HCT116 (cell line): ENCODE measurements at regions of chr3 and their contacts with region 1.

Region 1: DNA sequence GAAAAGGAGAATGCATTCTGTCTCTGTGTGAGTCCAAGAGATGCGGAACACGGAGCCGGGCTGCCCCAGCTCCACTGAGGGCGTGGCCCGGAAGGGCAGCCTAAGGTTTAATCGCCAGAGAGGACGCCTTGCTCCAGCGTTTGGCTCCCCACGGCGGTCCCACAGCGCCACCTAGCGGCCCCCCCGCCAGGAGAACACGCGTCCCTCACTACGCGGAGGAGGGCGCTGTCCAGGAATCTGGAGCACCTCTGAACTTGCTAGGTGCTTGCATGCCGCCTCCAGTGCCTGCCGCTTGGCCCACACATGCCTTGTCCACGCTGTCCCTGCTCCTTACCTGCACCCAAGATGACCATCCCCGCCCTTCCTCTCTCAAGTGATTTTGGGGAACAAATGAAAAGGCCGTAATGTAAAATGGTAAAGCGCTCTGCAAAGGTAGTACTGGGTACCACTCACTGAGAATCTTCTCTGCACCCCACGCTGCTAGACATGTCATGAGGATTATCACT is 14.4 kb upstream of the MRPS22 start:
- DNase-seq: peak; percentile 74
- ATAC-seq: peak; percentile 93
- H3K4me3 ChIP-seq: peak overlapping the region; percentile 26 to 38
- H3K27ac ChIP-seq: peak overlapping the region; percentile 29; the same call in 1 of the 2 replicates
- H3K4me1 ChIP-seq: peaks cover 34 to 44% of the 10 kb centered on the region in 2 experiments
- H3K27me3 ChIP-seq: no peaks in the 10 kb centered on the region
- CTCF ChIP-seq: peak; percentile 99 to 100 (median 99)
- POLR2A ChIP-seq: no peak
- RAD21 ChIP-seq: peak; percentile 100

Region 2: DNA sequence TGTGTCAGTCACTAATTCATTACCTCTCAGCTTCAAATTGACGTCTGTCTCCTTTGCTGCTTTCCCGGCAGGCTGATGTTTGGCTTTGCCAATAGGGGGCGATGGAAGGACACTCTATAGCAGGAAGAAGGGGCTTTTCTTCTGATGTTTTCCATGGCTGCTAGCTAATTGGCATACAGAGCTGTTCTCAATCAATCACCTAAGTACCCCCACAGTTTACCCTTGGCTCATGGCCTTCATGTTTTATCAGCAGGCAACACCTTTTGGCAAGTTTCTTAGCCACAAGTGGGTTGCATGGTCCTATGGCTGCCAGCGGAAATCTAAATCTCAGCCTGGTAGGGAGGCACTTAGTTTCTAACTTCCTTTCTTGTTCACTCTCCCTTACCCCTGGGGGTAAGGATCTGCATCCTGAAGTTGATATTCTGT is 849.9 kb before region 1 on chr3:
- CTCF ChIA-PET with region 1: interaction called, 3 read pairs
- POLR2A ChIA-PET with region 1: no interaction called
- RAD21 ChIA-PET with region 1: no interaction called
- intact Hi-C with region 1: loop called (anchors 10 kb)
- DNase-seq: peak; percentile 35
- ATAC-seq: peak; percentile 87
- H3K4me3 ChIP-seq: no peak overlapping the region
- H3K27ac ChIP-seq: no peak overlapping the region
- H3K4me1 ChIP-seq: no peaks in the 10 kb centered on the region
- H3K27me3 ChIP-seq: no peaks in the 10 kb centered on the region
- CTCF ChIP-seq: peak; percentile 65 to 97 (median 91); a peak in 5 of 6 replicates
- POLR2A ChIP-seq: no peak
- RAD21 ChIP-seq: peak; percentile 80

Region 3: GRCh38 chr3:138923531-138923994 is 405.8 kb before region 1 on chr3:
- CTCF ChIA-PET with region 1: interaction called, 7 read pairs
- POLR2A ChIA-PET with region 1: no interaction called
- RAD21 ChIA-PET with region 1: interaction called in 1 of 2 experiments, 3 read pairs
- intact Hi-C with region 1: loop called (anchors 5 kb)
- DNase-seq: peak; percentile 82
- ATAC-seq: peak; percentile 83
- H3K4me3 ChIP-seq: 0 out of 4 replicates have a peak overlapping the region, but pooled peaks of 1 of the 2 experiments have one; percentile 25
- H3K27ac ChIP-seq: no peak overlapping the region
- H3K4me1 ChIP-seq: peaks cover 16 to 20% of the 10 kb centered on the region in 2 experiments
- H3K27me3 ChIP-seq: no peaks in the 10 kb centered on the region
- CTCF ChIP-seq: peak in 2 of 3 experiments; percentile 93 to 94; a peak in 4 of 6 replicates
- POLR2A ChIP-seq: no peak
- RAD21 ChIP-seq: no peak

Region 4: GRCh38 chr3:138941259-138941885 is 388.0 kb before region 1 on chr3:
- CTCF ChIA-PET with region 1: interaction called, 26 read pairs
- POLR2A ChIA-PET with region 1: no interaction called
- RAD21 ChIA-PET with region 1: interaction called in 1 of 2 experiments, 4 read pairs
- intact Hi-C with region 1: loop called (anchors 1 kb)
- DNase-seq: peak; percentile 32
- ATAC-seq: peak; percentile 83
- H3K4me3 ChIP-seq: no peak overlapping the region
- H3K27ac ChIP-seq: no peak overlapping the region
- H3K4me1 ChIP-seq: peaks cover 2 to 7% of the 10 kb centered on the region in 2 experiments; a peak in 3 of 4 replicates
- H3K27me3 ChIP-seq: no peaks in the 10 kb centered on the region
- CTCF ChIP-seq: peak; percentile 71 to 80 (median 79)
- POLR2A ChIP-seq: no peak
- RAD21 ChIP-seq: peak; percentile 68

Region 5: DNA sequence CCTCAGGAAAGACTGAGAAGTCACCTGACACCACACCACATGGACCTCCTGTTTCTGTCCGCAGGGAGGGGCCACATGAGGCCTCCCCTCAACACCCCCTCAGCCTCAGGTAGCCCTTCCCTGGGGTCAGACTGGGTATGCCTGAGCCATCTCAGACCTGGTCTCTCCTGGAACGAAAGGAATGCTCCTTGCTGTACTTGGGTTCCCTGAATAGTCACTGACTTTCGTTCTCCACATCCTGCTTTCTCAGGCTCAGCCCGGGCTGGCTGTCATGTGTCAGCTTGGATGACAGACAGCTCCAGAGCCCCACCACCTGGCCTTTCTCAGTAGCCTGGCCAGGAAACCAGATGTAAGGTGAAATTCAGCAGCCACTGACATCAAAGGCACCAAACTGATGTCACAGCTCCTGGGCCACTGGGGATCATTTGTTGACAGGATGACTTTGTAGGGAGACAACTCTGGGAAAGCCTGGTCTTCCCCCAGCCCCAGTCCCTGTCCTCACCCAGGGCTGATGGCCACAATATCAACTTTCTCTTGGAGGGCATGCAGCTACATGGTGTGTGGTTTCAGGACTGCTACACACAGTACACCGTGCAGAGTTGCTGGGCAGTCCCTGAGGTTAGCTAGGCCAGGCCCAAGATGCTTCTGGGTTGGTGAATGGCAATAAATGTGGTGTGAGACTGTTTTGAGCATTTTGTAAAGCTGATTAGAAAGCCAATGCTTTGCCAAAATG is 127.0 kb before region 1 on chr3:
- CTCF ChIA-PET with region 1: interaction called, 5 read pairs
- POLR2A ChIA-PET with region 1: no interaction called
- RAD21 ChIA-PET with region 1: no interaction called
- intact Hi-C with region 1: loop called (anchors 1 kb)
- DNase-seq: peak; percentile 54
- ATAC-seq: peak; percentile 92
- H3K4me3 ChIP-seq: peak overlapping the region in 1 of 2 experiments; percentile 24; a peak in 1 of 4 replicates
- H3K27ac ChIP-seq: peak overlapping the region; percentile 26; the same call in 1 of the 2 replicates
- H3K4me1 ChIP-seq: peaks cover 13 to 19% of the 10 kb centered on the region in 2 experiments
- H3K27me3 ChIP-seq: no peaks in the 10 kb centered on the region
- CTCF ChIP-seq: peak; percentile 22 to 45 (median 38); a peak in 3 of 6 replicates
- POLR2A ChIP-seq: no peak
- RAD21 ChIP-seq: peak; percentile 81

Region 6: GRCh38 chr3:140170612-140171011 is 841.2 kb after region 1 on chr3:
- CTCF ChIA-PET with region 1: no interaction called
- POLR2A ChIA-PET with region 1: no interaction called
- RAD21 ChIA-PET with region 1: no interaction called
- intact Hi-C with region 1: no loop called
- DNase-seq: no peak
- ATAC-seq: no peak
- H3K4me3 ChIP-seq: no peak overlapping the region
- H3K27ac ChIP-seq: no peak overlapping the region
- H3K4me1 ChIP-seq: no peaks in the 10 kb centered on the region
- H3K27me3 ChIP-seq: peaks cover 27% of the 10 kb centered on the region
- CTCF ChIP-seq: no peak
- POLR2A ChIP-seq: no peak
- RAD21 ChIP-seq: no peak